Activated naive CD4-positive, alpha-beta T cell treated with anti-CD3 and anti-CD28 coated beads for 36 hours (primary cell): ENCODE measurements at regions of chr11 and their contacts with region 1.

Region 1: GRCh38 chr11:119101759-119102423 is at the start of gene DPAGT1:
- DNase-seq: peak; percentile 92
- H3K4me3 Mint-ChIP-seq: peak within 1 kb of the TSS; percentile 94
- H3K27ac Mint-ChIP-seq: peak within 1 kb of the TSS; percentile 95
- H3K4me1 Mint-ChIP-seq: peaks cover 35% of the 10 kb centered on the region
- H3K27me3 Mint-ChIP-seq: no peaks in the 10 kb centered on the region
- total RNA-seq, gene DPAGT1: 52.2 to 53.1 TPM

Region 2: DNA sequence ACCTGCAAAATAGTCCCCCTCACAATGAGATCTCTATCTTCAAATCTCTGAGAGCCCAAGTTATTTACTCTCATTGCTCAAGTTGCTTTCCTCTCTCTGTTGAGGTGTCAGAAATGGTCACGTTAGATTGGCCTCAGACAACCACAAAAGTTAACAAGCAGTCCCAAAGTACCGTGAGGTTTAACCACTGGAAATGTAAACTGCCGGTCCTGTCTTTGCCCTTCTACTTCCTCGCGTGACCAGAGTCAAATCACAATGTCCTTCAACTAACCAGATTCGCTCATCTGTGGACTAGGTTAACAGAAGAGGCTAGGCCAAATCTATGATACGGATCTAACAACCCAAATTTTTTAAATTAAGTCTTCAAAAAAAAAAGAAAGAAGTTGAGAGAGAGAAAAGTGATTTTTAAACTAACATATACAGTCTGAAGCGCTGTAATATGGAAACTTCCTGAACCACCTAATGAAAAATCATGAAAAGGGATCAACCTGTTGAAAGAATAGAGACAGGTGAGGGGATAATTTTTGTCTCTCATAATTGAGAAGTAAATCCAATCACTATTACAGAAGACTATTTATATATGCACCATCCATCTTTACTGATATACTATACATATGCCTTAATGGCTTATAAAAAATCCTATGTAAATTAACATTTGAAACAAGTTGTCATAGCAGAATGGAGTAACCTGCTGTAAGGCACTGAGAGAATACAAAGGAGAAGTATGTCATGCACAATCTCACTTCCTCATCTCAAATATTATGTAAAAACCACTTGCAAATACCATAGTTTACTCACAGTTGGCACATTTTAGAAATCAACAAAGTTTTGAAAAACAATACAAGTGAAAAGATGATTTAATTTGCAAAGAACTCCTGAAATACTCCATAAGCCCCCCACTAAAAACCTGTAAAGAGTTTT is 873.8 kb before region 1 on chr11:
- CTCF ChIA-PET with region 1: no interaction called
- intact Hi-C with region 1: loop called (anchors 10 kb)
- DNase-seq: peak; percentile 30
- H3K4me3 Mint-ChIP-seq: peak overlapping the region; percentile 3
- H3K27ac Mint-ChIP-seq: peak overlapping the region; percentile 89
- H3K4me1 Mint-ChIP-seq: peaks cover 20% of the 10 kb centered on the region
- H3K27me3 Mint-ChIP-seq: no peaks in the 10 kb centered on the region

Region 3: GRCh38 chr11:119018074-119018938 is 83.6 kb before region 1 on chr11 and contains the starts of genes RPS25 and TRAPPC4:
- CTCF ChIA-PET with region 1: interaction called, 4 read pairs
- intact Hi-C with region 1: loop called (anchors 1 kb)
- DNase-seq: peak; percentile 98
- H3K4me3 Mint-ChIP-seq: peak within 1 kb of the TSS; percentile 98
- H3K27ac Mint-ChIP-seq: peak within 1 kb of the TSS; percentile 99
- H3K4me1 Mint-ChIP-seq: peaks cover 59% of the 10 kb centered on the region
- H3K27me3 Mint-ChIP-seq: no peaks in the 10 kb centered on the region
- total RNA-seq, gene RPS25: 2,183 to 2,206 TPM
- total RNA-seq, gene TRAPPC4: 66.4 to 69.9 TPM

Region 4: GRCh38 chr11:119067371-119068222 is 34.3 kb before region 1 on chr11 and contains the start of gene VPS11:
- CTCF ChIA-PET with region 1: interaction called, 6 read pairs
- intact Hi-C with region 1: loop called (anchors 1 kb)
- DNase-seq: peak; percentile 99
- H3K4me3 Mint-ChIP-seq: peak within 1 kb of the TSS; percentile 91
- H3K27ac Mint-ChIP-seq: peak within 1 kb of the TSS; percentile 96
- H3K4me1 Mint-ChIP-seq: peaks cover 37% of the 10 kb centered on the region
- H3K27me3 Mint-ChIP-seq: no peaks in the 10 kb centered on the region
- total RNA-seq, gene VPS11: 16.9 to 19.5 TPM

Region 5: DNA sequence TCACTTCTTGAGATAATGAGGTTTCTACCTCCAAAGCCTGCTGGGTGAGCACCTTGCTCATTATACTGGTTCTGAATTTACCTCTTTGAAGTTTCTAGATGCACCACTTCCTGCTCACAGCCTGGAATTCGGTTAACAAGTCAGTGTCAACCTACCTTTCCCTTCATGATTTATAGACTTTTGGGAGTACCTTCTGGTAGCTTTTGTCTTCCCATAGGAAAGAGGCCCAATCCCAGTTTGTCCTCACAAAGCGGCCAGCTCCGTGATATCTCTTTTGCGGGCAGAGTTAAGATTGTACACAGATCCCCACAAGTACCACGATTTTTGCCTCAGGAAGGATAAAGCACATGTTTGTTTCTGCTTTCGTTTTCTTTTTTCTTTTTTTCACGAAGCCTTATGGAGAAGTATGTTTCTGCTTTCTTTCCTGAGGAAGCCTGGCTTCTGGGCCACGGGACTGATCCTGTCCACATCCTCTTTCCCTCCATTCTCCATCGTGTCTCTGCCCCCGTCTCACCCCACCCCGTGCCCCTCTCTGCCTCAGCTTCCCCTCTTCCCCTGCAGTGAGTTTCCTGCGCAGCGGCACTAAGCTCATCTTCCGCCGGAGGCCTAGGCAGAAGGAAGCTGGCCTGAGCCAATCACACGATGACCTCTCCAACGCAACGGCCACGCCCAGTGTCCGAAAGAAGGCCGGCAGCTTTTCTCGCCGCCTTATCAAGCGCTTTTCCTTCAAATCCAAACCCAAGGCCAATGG is 13.8 kb after region 1 on chr11:
- CTCF ChIA-PET with region 1: interaction called, 4 read pairs
- intact Hi-C with region 1: loop called (anchors 1 kb)
- DNase-seq: peak; percentile 66
- H3K4me3 Mint-ChIP-seq: peak overlapping the region; percentile 76
- H3K27ac Mint-ChIP-seq: peak overlapping the region; percentile 96
- H3K4me1 Mint-ChIP-seq: peaks cover 35% of the 10 kb centered on the region
- H3K27me3 Mint-ChIP-seq: no peaks in the 10 kb centered on the region

Region 6: DNA sequence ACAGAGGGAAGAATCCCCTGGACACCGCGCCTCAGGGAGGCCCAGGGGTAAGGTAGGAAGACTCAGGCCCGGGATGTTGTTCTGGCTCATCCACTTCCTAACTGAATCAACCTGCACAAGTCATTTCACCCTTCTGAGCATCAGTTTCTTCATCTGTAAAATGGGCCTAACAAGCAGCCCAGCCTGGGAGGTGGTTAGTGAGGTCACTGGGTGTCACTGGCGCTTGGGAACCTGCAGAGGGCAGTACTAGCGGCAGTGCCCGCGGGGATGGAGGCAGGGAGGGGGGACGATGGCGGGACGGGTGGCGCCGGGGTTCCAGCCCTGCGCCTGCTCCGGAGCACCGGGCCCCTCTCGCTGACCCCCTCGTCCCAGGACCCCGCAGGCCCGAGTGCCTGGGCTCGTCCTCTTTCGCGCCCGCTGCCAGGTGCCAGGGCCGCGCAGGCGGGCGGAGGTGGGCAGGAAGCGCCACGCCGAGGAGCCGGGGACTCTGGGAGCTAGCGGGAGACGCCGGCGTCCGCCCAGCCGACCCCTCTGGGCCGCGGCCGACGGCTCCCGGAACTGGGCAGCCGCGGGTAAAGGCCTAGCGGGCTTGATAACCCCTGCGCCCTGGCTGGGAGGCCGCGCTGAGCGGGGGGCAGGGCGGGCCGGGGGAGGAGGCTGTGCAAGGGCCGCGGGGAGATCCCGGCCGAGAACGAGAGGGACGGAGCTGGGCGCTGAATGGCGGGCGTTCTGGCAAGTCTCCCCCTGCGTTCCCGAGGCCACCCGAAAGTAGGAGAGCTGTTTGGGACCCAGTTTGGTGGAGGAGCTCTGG is 66.8 kb after region 1 on chr11 and contains the start of gene NLRX1:
- CTCF ChIA-PET with region 1: interaction called, 3 read pairs
- intact Hi-C with region 1: loop called (anchors 2 kb)
- DNase-seq: peak; percentile 92
- H3K4me3 Mint-ChIP-seq: peak within 1 kb of the TSS; percentile 92
- H3K27ac Mint-ChIP-seq: peak within 1 kb of the TSS; percentile 82
- H3K4me1 Mint-ChIP-seq: peaks cover 6% of the 10 kb centered on the region
- H3K27me3 Mint-ChIP-seq: no peaks in the 10 kb centered on the region
- total RNA-seq, gene NLRX1: 20.8 to 22.2 TPM

Region 7: GRCh38 chr11:119262668-119263351 is 160.9 kb after region 1 on chr11:
- CTCF ChIA-PET with region 1: no interaction called
- intact Hi-C with region 1: loop called (anchors 5 kb)
- DNase-seq: peak; percentile 35
- H3K4me3 Mint-ChIP-seq: no peak overlapping the region
- H3K27ac Mint-ChIP-seq: no peak overlapping the region
- H3K4me1 Mint-ChIP-seq: peaks cover 56% of the 10 kb centered on the region
- H3K27me3 Mint-ChIP-seq: no peaks in the 10 kb centered on the region

Region 8: GRCh38 chr11:119389611-119390254 is 287.8 kb after region 1 on chr11:
- CTCF ChIA-PET with region 1: no interaction called
- intact Hi-C with region 1: no loop called
- DNase-seq: peak; percentile 34
- H3K4me3 Mint-ChIP-seq: no peak overlapping the region
- H3K27ac Mint-ChIP-seq: no peak overlapping the region
- H3K4me1 Mint-ChIP-seq: no peaks in the 10 kb centered on the region
- H3K27me3 Mint-ChIP-seq: peaks cover under 1% of the 10 kb centered on the region

Region 9: GRCh38 chr11:119594639-119595249 is 492.9 kb after region 1 on chr11:
- CTCF ChIA-PET with region 1: no interaction called
- intact Hi-C with region 1: no loop called
- DNase-seq: no peak
- H3K4me3 Mint-ChIP-seq: no peak overlapping the region
- H3K27ac Mint-ChIP-seq: no peak overlapping the region
- H3K4me1 Mint-ChIP-seq: peaks cover 6% of the 10 kb centered on the region
- H3K27me3 Mint-ChIP-seq: peaks cover 4% of the 10 kb centered on the region